Cardiac septum (tissue), 1 donor: ENCODE measurements at regions of chr21 and their contacts with region 1.

Region 1: GRCh38 chr21:36989699-36990507 is 16.6 kb upstream of the RIPPLY3 start:
- DNase-seq: peak; percentile 95

Region 2: GRCh38 chr21:36966066-36966820 is 23.7 kb before region 1 on chr21 and contains the start of gene HLCS:
- intact Hi-C with region 1: loop called (anchors 1 kb)
- DNase-seq: no peak
- total RNA-seq, gene HLCS: 6.9 TPM

Region 3: GRCh38 chr21:37208056-37208721 is 218.3 kb after region 1 on chr21:
- intact Hi-C with region 1: no loop called
- DNase-seq: peak; percentile 92